CD14-positive monocyte (primary cell): ENCODE measurements at regions of chr1 and their contacts with region 1.

Region 1: DNA sequence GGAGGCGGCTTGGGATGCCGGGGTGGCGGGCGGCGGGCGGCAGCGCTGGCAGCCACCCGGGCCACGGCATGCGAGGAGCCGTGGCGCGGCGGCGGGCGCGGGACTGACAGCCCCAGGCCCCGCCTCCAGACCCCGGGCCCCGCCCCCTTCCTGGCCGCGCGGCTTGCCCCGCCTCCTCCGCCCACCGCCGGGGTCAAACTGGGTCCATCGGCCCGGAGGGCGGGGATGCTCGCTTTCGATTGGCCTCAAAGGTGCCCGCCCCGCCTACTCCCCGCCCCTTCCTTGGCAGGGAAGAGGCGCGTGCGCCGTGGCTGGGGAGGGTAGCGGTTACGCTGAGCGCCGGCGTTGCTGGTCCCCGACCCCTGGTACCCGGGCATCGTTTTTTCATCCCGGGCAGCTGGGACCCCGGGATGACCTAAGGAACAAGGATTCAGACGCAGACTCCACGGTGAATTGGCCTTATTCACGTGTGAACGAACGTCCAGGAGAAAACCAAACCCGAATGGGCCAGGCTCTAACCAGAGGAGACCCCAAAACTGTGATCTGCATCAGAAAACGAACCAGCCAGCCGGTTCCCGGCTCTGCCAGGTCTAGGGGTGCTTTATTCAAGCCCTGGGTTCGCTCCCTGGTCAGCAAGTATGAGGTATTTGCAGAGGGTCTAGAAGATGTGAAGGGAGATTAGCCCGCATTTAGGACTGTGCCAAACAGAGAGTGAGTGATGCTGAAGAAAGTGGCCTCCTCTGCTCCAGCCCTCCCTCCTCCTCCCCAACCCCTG is 117.2 kb upstream of the GUCA2B start:
- DNase-seq: peak; percentile 90 to 93 (median 92)
- H3K4me3 ChIP-seq: peak overlapping the region; percentile 52 to 88 (median 52)
- H3K4me3 Mint-ChIP-seq: peak overlapping the region; percentile 75 to 89
- H3K27ac ChIP-seq: no peak overlapping the region
- H3K27ac Mint-ChIP-seq: no peak overlapping the region
- H3K4me1 ChIP-seq: peaks cover 15 to 20% of the 10 kb centered on the region in 2 donors
- H3K4me1 Mint-ChIP-seq: peaks cover 16% of the 10 kb centered on the region
- H3K27me3 ChIP-seq: peaks cover 0 to 8% of the 10 kb centered on the region in 2 donors
- H3K27me3 Mint-ChIP-seq: peaks cover 7 to 12% (median 9%) of the 10 kb centered on the region in 3 donors
- CTCF ChIP-seq: no peak

Region 2: GRCh38 chr1:41830726-41831125 is 205.3 kb before region 1 on chr1:
- intact Hi-C with region 1: loop called in 1 of 2 experiments (anchors 10 kb)
- DNase-seq: no peak
- H3K4me3 ChIP-seq: no peak overlapping the region
- H3K4me3 Mint-ChIP-seq: no peak overlapping the region
- H3K27ac ChIP-seq: no peak overlapping the region
- H3K27ac Mint-ChIP-seq: no peak overlapping the region
- H3K4me1 ChIP-seq: no peaks in the 10 kb centered on the region
- H3K4me1 Mint-ChIP-seq: no peaks in the 10 kb centered on the region
- H3K27me3 ChIP-seq: no peaks in the 10 kb centered on the region
- H3K27me3 Mint-ChIP-seq: peaks cover 0 to 4% (median 4%) of the 10 kb centered on the region in 3 donors
- CTCF ChIP-seq: no peak